Endothelial cell of umbilical vein (primary cell): ENCODE measurements at regions of chr2 and their contacts with region 1.

Region 1: GRCh38 chr2:104856086-104856972 is 2.4 kb downstream of the POU3F3 start:
- DNase-seq: no peak
- H3K4me3 ChIP-seq: no peak overlapping the region
- H3K27ac ChIP-seq: no peak overlapping the region
- H3K4me1 ChIP-seq: peaks cover 2% of the 10 kb centered on the region
- H3K27me3 ChIP-seq: peaks cover 65 to 82% of the 10 kb centered on the region in 2 experiments
- CTCF ChIP-seq: no peak
- POLR2A ChIP-seq: no peak

Region 2: DNA sequence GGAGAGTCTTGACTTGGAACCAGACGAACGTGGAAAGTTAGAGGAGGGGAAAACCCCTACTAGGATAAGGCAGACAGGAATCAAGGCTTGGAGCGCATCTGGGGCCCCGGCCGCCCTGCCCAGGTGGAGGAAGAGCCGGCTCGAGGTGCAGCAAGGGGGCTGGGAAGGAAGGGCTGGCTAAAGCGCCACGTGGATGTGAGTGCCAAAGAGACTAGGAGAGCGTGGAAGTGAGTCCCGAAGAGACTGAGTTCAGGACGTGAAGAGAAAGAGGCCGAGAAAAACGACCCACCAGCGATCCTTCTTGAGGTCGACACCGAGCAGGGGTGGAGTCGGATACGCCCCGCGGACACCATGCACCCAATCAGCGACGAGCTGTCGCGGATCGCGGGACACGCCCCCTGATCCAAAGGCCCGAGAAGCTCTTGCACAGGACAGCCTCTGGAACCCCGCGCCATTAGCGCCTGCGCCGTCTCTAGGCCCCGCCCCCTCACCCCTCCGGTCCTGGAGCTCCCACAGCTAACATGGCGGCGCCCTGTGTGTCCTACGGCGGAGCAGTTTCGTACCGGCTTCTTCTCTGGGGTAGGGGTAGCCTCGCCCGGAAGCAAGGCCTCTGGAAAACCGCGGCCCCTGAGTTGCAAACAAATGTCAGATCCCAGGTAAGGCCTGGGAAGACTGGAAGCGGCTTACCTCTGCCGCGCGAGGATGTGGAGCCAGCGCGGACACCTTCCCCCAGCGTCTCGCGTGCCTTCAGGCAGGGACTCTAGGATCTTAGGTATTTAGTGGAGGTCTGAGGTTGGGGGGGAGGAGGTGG is 181.4 kb after region 1 on chr2 and contains the start of gene MRPS9:
- CTCF ChIA-PET with region 1: no interaction called
- POLR2A ChIA-PET with region 1: no interaction called
- dilution Hi-C with region 1: no loop called
- intact Hi-C with region 1: loop called (anchors 5 kb)
- DNase-seq: peak; percentile 99
- H3K4me3 ChIP-seq: peak within 1 kb of the TSS; percentile 68 to 90 (median 74)
- H3K27ac ChIP-seq: peak within 1 kb of the TSS; percentile 48
- H3K4me1 ChIP-seq: peaks cover 10% of the 10 kb centered on the region
- H3K27me3 ChIP-seq: no peaks in the 10 kb centered on the region
- CTCF ChIP-seq: no peak
- POLR2A ChIP-seq: peak; percentile 96
- total RNA-seq, gene MRPS9: 21.8 and 23.9 TPM in 2 replicates